WTC11 (cell line): ENCODE measurements at regions of chr5 and their contacts with region 1.

Region 1: GRCh38 chr5:160081495-160081894 is 37.8 kb downstream of the PWWP2A start:
- DNase-seq: no peak
- ATAC-seq: no peak
- H3K4me3 Mint-ChIP-seq: no peak overlapping the region
- H3K27ac Mint-ChIP-seq: 0 out of 2 replicates have a peak overlapping the region, but pooled peaks have one; percentile 32
- H3K4me1 Mint-ChIP-seq: peaks cover 29% of the 10 kb centered on the region
- H3K27me3 Mint-ChIP-seq: no peaks in the 10 kb centered on the region; the same call in 1 of the 2 replicates
- CTCF ChIP-seq: no peak

Region 2: DNA sequence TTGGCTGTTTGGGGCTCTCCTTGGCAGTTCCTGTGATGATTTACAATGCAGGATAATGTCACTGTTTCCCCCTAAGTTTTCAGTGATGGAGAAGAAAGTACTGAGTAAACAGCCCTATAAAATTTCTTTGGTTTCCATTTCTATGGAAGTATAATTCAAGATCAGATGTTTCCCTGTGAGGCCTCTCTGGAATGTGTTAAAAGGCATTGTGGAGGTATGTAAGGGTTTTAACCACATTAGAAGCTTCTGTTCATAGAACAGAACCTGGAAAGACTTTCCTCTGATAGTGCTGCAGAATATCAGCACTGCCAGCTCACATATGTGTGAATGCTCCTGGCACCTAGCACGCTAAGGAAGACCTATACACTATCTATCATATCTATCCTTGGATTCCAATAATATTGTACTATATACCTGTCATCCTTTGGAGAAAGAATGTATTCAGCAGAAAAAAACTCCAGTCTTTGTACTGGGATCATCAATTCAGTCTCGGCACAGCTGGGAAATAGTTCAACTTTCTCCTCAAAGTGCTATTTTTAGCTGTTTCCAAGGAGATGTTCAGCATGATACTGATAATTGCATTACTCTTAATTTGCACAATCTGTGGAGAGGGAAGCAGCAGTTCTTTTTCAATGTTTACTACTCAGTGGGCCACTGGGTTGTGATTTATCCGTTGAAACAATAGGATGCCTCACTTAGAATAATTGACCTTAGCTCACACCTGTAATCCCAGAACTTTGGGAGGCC is 50.7 kb before region 1 on chr5:
- CTCF ChIA-PET with region 1: no interaction called
- POLR2A ChIA-PET with region 1: no interaction called
- DNase-seq: no peak
- ATAC-seq: no peak
- H3K4me3 Mint-ChIP-seq: no peak overlapping the region
- H3K27ac Mint-ChIP-seq: no peak overlapping the region
- H3K4me1 Mint-ChIP-seq: no peaks in the 10 kb centered on the region
- H3K27me3 Mint-ChIP-seq: no peaks in the 10 kb centered on the region
- CTCF ChIP-seq: no peak

Region 3: GRCh38 chr5:160064995-160065630 is 16.4 kb before region 1 on chr5:
- CTCF ChIA-PET with region 1: interaction called, 26 read pairs
- POLR2A ChIA-PET with region 1: no interaction called
- DNase-seq: no peak
- ATAC-seq: no peak
- H3K4me3 Mint-ChIP-seq: no peak overlapping the region
- H3K27ac Mint-ChIP-seq: peak overlapping the region; percentile 6
- H3K4me1 Mint-ChIP-seq: peaks cover 22% of the 10 kb centered on the region
- H3K27me3 Mint-ChIP-seq: no peaks in the 10 kb centered on the region
- CTCF ChIP-seq: no peak

Region 4: DNA sequence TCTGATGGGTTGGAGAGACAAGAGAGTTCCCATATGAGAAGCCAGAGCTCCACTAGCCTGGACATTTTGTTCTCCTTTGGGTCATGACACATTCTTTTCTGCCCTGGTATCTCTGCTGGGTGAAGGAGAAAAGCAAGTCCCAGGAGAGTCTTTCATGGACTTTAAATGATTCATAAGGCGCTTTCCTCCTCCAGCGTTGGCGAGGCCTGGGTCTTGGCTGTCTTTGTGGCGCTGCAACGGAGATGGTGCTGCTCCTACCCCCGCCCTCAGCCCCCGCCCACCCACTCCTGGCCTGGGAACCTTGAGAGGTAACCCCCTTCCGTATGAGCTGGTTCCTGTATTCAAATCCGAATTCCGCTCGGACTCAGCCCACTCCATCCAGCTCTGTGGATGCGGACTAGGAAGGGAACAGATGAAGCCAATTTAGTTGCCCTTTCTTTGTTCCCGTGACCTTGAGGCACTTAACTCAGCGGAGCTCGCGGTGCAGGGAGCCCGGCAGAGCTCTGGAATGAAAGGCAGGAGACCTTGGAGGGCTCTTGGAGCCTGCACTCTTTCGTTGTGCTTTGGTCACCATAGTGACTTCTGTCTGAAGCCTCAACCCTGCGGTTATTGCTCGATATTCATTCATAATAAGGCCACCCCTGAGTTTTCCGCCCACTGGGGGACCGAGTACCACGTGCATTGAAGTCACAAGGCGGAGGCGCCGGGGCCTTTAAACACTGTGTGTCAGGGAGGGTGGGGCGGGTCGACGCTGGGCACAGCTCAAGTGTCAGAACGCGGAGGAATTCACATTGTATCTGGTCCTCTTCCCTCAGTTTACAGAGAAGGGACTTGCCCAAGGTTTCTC is 51.8 kb after region 1 on chr5:
- CTCF ChIA-PET with region 1: interaction called, 18 read pairs
- POLR2A ChIA-PET with region 1: no interaction called
- DNase-seq: peak; percentile 64
- ATAC-seq: peak; percentile 80
- H3K4me3 Mint-ChIP-seq: peak overlapping the region; percentile 53
- H3K27ac Mint-ChIP-seq: peak overlapping the region; percentile 96
- H3K4me1 Mint-ChIP-seq: peaks cover 28% of the 10 kb centered on the region
- H3K27me3 Mint-ChIP-seq: no peaks in the 10 kb centered on the region
- CTCF ChIP-seq: no peak

Region 5: GRCh38 chr5:160159991-160160792 is 78.7 kb after region 1 on chr5:
- CTCF ChIA-PET with region 1: interaction called, 15 read pairs
- POLR2A ChIA-PET with region 1: interaction called, 4 read pairs
- DNase-seq: peak; percentile 80
- ATAC-seq: peak; percentile 85
- H3K4me3 Mint-ChIP-seq: peak overlapping the region; percentile 12
- H3K27ac Mint-ChIP-seq: peak overlapping the region; percentile 100
- H3K4me1 Mint-ChIP-seq: peaks cover 52% of the 10 kb centered on the region
- H3K27me3 Mint-ChIP-seq: no peaks in the 10 kb centered on the region
- CTCF ChIP-seq: no peak

Region 6: DNA sequence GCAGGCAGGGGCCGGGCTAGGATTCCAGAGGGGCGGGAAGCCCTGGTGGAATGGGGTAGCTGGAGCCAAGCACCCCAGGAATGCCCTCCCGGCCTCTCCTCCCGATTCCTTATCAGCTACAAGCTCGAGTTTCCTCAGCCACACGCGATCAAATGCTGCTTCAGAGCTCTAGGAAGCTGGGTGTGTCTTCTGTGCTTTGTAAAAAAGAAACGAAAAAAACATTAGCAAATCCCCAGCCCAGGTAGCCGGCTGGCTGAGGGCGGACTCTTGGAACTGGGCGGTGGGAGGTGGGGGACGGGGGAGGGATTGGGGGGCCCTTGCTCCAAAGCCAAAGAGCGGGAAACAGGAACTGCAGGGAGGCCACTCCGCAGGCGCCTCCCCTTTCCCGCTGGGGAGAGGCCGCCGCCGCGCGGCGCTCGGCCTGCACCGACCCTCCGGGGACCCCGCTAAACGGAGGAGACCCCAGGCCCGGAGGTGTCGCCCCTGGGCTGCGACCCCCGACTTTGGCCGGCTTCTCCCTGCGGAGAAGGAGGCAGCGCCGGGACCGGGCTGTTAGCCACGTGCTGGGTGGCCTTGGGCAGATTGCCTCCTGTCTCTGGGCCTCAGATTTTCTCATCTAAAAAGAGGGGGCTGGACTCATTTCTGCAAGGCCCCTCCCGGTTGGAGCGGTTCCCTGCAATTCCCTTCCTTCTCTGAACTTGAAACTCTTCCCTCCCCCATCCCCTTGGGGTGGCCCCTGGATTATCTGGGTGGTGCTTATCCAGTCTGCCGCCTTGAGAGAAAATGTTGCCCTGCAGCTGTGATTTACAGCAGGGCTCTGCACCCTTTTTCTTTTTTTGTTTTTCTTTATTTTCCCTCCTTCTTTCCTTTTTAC is 106.9 kb after region 1 on chr5:
- CTCF ChIA-PET with region 1: interaction called, 19 read pairs
- POLR2A ChIA-PET with region 1: no interaction called
- DNase-seq: peak; percentile 77
- ATAC-seq: peak; percentile 75
- H3K4me3 Mint-ChIP-seq: peak overlapping the region; percentile 57
- H3K27ac Mint-ChIP-seq: peak overlapping the region; percentile 89
- H3K4me1 Mint-ChIP-seq: peaks cover 22% of the 10 kb centered on the region
- H3K27me3 Mint-ChIP-seq: peaks cover 15% of the 10 kb centered on the region
- CTCF ChIP-seq: no peak

Region 7: DNA sequence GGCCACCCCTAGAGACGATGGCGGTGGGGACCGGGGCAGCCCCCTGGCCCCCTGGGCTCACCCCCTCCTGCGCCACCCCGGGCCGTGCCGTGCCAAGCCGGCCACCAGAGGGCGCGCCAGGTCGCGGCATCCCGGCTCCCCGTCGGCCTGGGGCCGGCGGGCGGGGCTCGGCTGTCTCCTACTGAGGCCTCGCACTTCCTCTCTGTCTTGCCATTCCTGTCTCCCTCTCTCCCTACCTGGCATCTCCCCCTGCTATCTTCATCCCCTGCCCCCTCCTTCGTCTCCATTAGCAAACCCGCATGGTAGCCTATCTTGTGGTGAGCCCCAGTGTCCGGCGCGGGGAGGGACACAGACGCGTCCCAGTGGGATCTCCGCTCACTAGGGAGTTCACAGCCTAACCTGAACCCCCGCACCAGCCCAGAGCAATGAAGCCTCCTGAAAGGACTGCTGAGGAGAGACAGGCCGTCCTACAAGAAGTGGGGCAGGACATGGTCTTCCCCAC is 118.0 kb after region 1 on chr5:
- CTCF ChIA-PET with region 1: interaction called, 17 read pairs
- POLR2A ChIA-PET with region 1: no interaction called
- DNase-seq: peak; percentile 72
- ATAC-seq: peak; percentile 79
- H3K4me3 Mint-ChIP-seq: peak overlapping the region; percentile 69
- H3K27ac Mint-ChIP-seq: no peak overlapping the region
- H3K4me1 Mint-ChIP-seq: peaks cover 41% of the 10 kb centered on the region
- H3K27me3 Mint-ChIP-seq: peaks cover 4% of the 10 kb centered on the region; the same call in 1 of the 2 replicates
- CTCF ChIP-seq: peak; percentile 92

Region 8: GRCh38 chr5:160390787-160391696 is 309.5 kb after region 1 on chr5:
- CTCF ChIA-PET with region 1: interaction called, 27 read pairs
- POLR2A ChIA-PET with region 1: interaction called, 4 read pairs
- DNase-seq: no peak
- ATAC-seq: no peak
- H3K4me3 Mint-ChIP-seq: no peak overlapping the region
- H3K27ac Mint-ChIP-seq: 0 out of 2 replicates have a peak overlapping the region, but pooled peaks have one; percentile 36
- H3K4me1 Mint-ChIP-seq: no peaks in the 10 kb centered on the region
- H3K27me3 Mint-ChIP-seq: peaks cover 9% of the 10 kb centered on the region
- CTCF ChIP-seq: no peak